Heart left ventricle (tissue), 16 donors: ENCODE measurements at regions of chr21 and their contacts with region 1.

Region 1: GRCh38 chr21:33229784-33230544 is at the start of gene IFNAR2:
- DNase-seq: peak; percentile 81 to 91 (median 86)
- ATAC-seq: peak; percentile 62 to 98 (median 90)
- H3K4me3 ChIP-seq: peak within 1 kb of the TSS; percentile 88 to 100 (median 98)
- H3K27ac ChIP-seq: peak within 1 kb of the TSS; percentile 90 to 100 (median 98)
- H3K4me1 ChIP-seq: peaks cover 2 to 51% (median 31%) of the 10 kb centered on the region in 12 donors
- H3K27me3 ChIP-seq: no peaks in the 10 kb centered on the region
- CTCF ChIP-seq: peak in 1 of 12 donors; percentile 9
- POLR2A ChIP-seq: peak in 1 of 2 donors; percentile 89
- total RNA-seq, gene IFNAR2: 6.5 to 46.7 (median 12.9) TPM

Region 2: DNA sequence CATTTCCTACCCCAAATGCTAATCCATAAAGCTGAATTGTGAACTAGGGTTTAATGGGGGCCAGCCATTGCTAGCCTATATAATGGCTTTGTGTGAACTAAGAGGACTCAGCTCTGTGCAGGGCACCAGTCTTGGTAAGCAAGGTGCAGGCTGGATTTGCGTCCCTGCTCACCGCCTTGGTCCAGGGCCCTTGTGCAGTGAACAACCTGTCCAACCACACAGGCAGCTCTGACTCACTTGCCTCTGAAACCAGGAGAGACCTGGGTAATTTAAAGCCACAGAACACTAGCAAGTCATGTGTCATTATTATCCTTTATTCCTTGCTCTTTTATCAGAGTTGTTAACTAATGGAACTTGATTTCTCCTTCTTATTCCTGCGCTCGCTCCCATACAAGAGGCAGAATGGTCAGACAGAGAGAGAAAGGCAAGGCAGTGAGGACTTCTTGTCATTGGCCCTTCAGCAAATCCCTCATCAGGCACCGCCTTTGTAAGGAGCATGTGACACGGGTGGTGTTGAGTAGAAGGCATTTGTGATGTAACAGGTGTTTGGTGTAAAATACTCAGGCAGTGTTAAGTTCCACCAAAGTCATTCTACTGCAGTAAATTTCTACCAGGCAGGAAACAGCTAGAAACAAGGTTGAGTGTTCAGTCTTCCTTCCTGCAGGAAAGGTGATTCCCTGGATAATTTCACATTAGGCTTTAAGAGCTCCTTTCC is 271.5 kb before region 1 on chr21:
- intact Hi-C with region 1: no loop called
- DNase-seq: no peak
- ATAC-seq: no peak
- H3K4me3 ChIP-seq: no peak overlapping the region
- H3K27ac ChIP-seq: no peak overlapping the region
- H3K4me1 ChIP-seq: no peaks in the 10 kb centered on the region
- H3K27me3 ChIP-seq: peaks cover 0 to 79% (median 15%) of the 10 kb centered on the region in 9 donors
- CTCF ChIP-seq: no peak
- POLR2A ChIP-seq: no peak

Region 3: GRCh38 chr21:33171616-33172169 is 58.3 kb before region 1 on chr21:
- intact Hi-C with region 1: no loop called
- DNase-seq: no peak
- ATAC-seq: no peak
- H3K4me3 ChIP-seq: no peak overlapping the region
- H3K27ac ChIP-seq: no peak overlapping the region
- H3K4me1 ChIP-seq: no peaks in the 10 kb centered on the region
- H3K27me3 ChIP-seq: peaks cover 0 to 46% (median 6%) of the 10 kb centered on the region in 9 donors
- CTCF ChIP-seq: no peak
- POLR2A ChIP-seq: no peak

Region 4: GRCh38 chr21:33266050-33266788 is 36.3 kb after region 1 on chr21 and contains the start of gene IL10RB:
- intact Hi-C with region 1: loop called in 2 of 10 experiments (anchors 5 kb)
- DNase-seq: peak; percentile 76 to 89 (median 82)
- ATAC-seq: peak; percentile 73 to 95 (median 92)
- H3K4me3 ChIP-seq: peak within 1 kb of the TSS; percentile 57 to 100 (median 82)
- H3K27ac ChIP-seq: peak within 1 kb of the TSS; percentile 69 to 98 (median 88)
- H3K4me1 ChIP-seq: peaks cover 0 to 66% (median 13%) of the 10 kb centered on the region in 12 donors
- H3K27me3 ChIP-seq: no peaks in the 10 kb centered on the region
- CTCF ChIP-seq: no peak
- POLR2A ChIP-seq: peak in 1 of 2 donors; percentile 65
- total RNA-seq, gene IL10RB: 4.5 to 28.2 (median 8.3) TPM

Region 5: DNA sequence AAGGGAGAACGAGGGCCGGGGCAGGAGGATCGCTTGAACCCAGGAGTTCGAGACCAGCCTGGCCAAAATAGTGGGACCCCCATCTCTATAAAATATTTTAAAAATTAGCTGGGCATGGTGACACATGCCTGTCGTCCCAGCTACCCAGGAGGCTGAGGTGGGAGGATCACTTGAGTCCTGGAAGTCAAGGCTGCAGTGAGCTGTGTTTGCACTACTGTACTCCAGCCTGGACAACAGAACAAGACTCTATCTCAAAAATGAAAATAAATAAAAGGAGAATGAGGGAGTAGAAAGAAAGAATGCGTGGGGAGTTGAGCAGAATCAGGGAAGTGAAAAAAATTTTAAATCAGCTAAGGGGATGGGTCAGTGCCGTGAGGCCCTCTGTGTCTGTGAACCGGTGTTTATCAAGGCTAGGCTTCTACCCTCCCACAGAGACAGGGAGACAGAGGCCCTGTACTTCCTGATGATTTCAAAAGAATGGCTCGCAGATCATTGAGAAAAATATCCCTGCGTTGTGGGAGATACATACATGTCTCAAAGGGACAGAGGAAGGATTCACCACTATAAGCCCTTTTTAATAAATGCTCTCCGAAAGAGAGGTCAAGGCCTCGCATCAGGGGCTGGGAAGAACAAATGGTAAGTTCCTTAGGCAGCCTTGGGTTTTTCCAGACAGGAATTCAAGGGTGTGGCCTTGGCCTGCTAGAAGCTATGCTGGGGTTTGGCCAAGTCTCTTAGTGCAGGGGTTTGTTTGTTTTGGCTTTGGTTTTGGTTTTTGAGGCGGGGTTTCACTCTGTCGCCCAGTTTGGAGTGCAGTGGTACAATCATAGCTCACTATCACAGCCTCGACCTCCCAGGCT is 56.9 kb after region 1 on chr21:
- intact Hi-C with region 1: loop called in 2 of 10 experiments (anchors 5 to 10 kb)
- DNase-seq: peak in 4 of 5 donors; percentile 62 to 81 (median 66)
- ATAC-seq: peak; percentile 47 to 90 (median 80)
- H3K4me3 ChIP-seq: peak overlapping the region in 1 of 12 donors; percentile 16
- H3K27ac ChIP-seq: peak overlapping the region; percentile 26 to 86 (median 70)
- H3K4me1 ChIP-seq: peaks cover 0 to 44% (median 26%) of the 10 kb centered on the region in 12 donors
- H3K27me3 ChIP-seq: no peaks in the 10 kb centered on the region
- CTCF ChIP-seq: no peak
- POLR2A ChIP-seq: no peak

Region 6: DNA sequence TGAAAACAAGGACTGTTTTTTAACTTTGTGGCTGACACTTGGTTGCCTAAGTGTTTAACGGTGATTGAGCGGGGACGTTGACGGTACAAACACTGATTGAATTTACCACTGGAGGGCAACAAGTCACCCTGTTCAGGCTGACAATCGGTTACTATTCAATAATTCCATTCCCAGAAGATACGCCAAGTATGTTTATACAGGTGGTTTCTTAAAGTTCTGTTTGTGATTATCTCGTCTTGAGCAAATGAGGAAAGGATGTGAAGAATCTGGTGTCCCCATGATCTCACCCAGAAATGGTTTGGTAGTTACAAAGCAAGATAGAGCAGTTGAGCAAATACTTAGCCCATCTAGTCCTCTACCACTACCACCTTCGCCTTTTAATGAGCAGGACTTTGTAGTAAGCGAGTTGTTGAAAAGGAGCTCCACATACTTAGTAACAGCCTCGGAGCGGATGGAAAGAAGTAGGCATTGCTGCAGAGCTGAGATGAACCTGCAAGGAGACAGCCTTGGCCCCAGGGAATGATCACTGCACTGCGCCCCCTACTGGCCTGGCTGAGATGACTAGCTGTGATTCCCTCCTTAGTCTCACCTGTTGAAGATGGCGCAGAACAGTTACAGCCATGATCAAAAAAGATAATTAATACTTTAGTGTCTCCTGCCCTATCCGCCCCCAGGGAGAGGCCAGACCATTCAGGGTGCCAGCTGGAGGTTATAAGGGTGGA is 131.1 kb after region 1 on chr21:
- intact Hi-C with region 1: loop called in 1 of 10 experiments (anchors 10 kb)
- DNase-seq: peak; percentile 74 to 86 (median 77)
- ATAC-seq: peak; percentile 74 to 86 (median 80)
- H3K4me3 ChIP-seq: peak overlapping the region in 11 of 12 donors; percentile 16 to 55 (median 36)
- H3K27ac ChIP-seq: peak overlapping the region in 11 of 12 donors; percentile 34 to 90 (median 58)
- H3K4me1 ChIP-seq: peaks cover 0 to 39% (median 20%) of the 10 kb centered on the region in 12 donors
- H3K27me3 ChIP-seq: no peaks in the 10 kb centered on the region
- CTCF ChIP-seq: peak; percentile 71 to 88 (median 82)
- POLR2A ChIP-seq: no peak